ENCODE measurements at regions of chr19 and their contacts with region 1.

Region 1: DNA sequence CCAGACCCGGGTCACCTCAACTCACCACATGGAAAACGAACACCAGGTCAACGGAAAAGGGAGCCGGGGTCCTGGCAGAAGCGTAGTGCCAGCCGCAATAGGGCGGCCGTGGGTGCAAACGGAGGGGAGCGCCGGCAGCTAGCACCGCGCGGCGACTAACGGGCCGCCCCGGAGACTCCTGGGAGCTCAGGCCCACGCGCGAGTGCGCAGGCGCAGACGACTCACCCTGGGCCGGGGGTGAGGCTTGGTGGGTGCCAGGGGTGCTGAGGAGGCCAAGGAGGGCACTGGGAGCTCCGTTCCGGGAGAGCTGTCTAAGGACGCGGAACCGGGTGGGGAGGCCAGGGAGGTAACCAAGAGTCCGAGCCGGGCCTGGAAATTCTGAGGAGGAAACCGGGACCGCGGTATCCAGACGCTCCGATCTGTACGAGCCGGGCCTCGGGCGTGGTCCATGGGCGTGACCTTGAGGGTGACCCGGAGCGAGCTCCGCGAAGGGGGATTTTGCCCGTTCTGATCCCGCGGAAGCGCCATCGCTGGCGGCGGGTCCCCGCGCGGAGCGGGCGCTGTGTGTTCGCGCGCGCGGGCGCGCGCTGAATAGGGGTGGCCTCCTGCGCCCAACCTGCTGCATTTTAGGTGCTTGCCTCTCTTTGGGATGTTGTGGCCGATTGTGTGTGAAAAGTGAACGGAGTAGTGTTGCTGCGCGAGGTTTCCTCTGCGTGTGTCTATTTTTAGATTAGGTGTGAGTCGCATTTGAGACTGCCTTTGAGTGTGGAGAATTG is at the start of gene ZNF382:
- DNase-seq: peak; percentile 75 to 92
- ATAC-seq: peak; percentile 51 to 81 (median 62)
- H3K4me3 ChIP-seq: peak within 1 kb of the TSS; percentile 78
- H3K4me3 Mint-ChIP-seq: peak within 1 kb of the TSS; percentile 81
- H3K27ac ChIP-seq: peak within 1 kb of the TSS; percentile 90
- H3K27ac Mint-ChIP-seq: peak within 1 kb of the TSS; percentile 80 to 89
- H3K4me1 ChIP-seq: peaks cover 20% of the 10 kb centered on the region
- H3K4me1 Mint-ChIP-seq: peaks cover 20 to 28% of the 10 kb centered on the region in 2 donors
- H3K27me3 ChIP-seq: no peaks in the 10 kb centered on the region
- H3K27me3 Mint-ChIP-seq: no peaks in the 10 kb centered on the region
- CTCF ChIP-seq: no peak
- total RNA-seq, gene ZNF382: 3.2 to 8.1 (median 4.2) TPM

Region 2: DNA sequence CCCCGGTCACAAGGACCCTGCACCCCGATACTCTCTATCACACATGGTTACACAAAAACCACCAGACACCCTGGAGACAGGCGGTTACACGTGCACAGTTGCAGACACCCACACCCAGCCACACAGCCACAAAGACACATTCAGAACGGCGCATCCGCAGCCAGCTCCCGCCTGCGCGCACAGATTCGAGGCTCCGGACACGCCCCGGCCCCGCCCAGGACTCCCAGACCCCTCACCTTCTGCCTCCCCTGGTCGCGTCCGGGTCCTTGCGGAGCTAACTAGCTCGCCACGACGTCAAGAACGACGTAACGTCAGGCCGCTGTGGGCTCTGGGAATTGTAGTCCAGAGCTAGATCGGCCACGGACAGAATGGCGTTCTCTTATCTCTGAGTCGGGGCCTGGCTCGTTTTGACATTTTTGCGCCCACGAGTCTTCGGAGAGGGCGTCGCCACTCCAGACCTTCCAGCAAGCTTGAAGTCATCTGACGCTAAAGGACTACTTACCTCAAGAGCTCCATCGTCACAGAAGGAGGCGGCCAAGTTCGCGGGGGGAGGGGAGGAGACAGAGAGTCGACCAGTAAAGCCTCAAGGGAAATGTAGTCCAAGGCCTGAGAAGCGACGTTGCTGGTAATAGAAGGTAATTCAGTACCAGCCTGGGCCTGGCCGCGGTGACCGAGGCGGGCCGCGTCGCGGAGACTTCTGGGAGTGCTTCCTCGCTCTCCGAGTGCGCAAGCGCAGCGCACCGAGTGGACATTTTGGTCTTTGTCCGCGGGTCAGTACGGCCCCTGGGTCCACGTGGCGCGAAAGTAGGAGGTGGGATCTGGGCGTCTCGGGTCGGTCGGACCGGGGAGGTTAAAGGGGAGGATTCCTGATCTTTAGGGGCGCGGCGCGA is 390.7 kb before region 1 on chr19 and contains the starts of genes ZNF146 and ZNF565:
- intact Hi-C with region 1: loop called (anchors 2 kb)
- DNase-seq: peak; percentile 90 to 97
- ATAC-seq: peak; percentile 81 to 95 (median 86)
- H3K4me3 ChIP-seq: peak within 1 kb of the TSS; percentile 92
- H3K4me3 Mint-ChIP-seq: no peak within 1 kb of the TSS
- H3K27ac ChIP-seq: peak within 1 kb of the TSS; percentile 91
- H3K27ac Mint-ChIP-seq: no peak within 1 kb of the TSS
- H3K4me1 ChIP-seq: peaks cover 18% of the 10 kb centered on the region
- H3K4me1 Mint-ChIP-seq: peaks cover 12 to 14% of the 10 kb centered on the region in 2 donors
- H3K27me3 ChIP-seq: no peaks in the 10 kb centered on the region
- H3K27me3 Mint-ChIP-seq: no peaks in the 10 kb centered on the region
- CTCF ChIP-seq: no peak
- total RNA-seq, gene ZNF146: 20.3 to 37.3 (median 21.5) TPM
- total RNA-seq, gene ZNF565: 7.7 to 19.1 (median 10.5) TPM

Region 3: DNA sequence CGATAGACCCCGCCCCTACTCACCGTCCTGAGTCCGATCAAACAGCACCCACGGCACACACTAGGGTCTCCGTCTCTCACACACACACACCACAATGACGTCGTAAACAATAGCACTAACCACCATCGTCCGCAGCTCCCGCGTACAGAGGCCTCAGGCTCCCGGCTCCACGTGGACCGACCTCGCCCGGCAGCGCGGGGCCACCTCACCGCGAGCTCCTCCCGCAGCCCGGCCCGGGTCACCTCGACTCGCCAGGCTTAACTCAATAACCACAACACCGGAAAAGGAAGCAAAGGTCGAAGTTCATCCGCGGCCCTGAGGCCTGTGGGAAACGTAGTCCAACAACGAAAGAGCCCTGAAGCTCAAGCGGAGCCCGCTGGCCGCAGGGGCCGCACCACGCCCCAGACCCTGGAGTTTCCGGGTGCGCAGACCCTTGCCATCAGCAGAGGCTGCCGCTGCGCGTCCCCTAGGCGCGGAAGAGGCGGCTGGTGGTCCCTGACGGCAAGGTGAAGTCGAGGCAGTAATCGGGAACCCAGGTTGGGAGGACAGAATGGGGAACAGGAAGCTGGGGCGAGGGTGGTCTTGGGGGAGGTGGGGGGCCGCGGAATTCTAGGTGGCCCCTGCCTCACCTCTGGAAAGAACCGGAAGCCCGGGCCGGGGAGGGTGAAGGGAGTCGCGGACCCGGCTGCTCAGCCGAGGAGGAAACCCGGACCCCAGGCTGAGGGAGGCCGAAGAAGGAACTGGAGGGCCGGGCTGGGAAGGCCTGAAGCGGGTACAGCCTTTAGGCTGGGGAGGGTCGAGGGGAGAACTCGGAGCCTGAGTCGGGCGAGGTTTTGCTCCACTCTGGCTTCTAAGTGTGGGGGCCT is 32.0 kb before region 1 on chr19 and contains the start of gene ZNF529:
- intact Hi-C with region 1: loop called (anchors 1 kb)
- DNase-seq: peak; percentile 88 to 95
- ATAC-seq: peak; percentile 90 to 97 (median 90)
- H3K4me3 ChIP-seq: peak within 1 kb of the TSS; percentile 83
- H3K4me3 Mint-ChIP-seq: peak within 1 kb of the TSS; percentile 89
- H3K27ac ChIP-seq: peak within 1 kb of the TSS; percentile 86
- H3K27ac Mint-ChIP-seq: peak within 1 kb of the TSS; percentile 91 to 100
- H3K4me1 ChIP-seq: peaks cover 17% of the 10 kb centered on the region
- H3K4me1 Mint-ChIP-seq: peaks cover 36% of the 10 kb centered on the region in 2 donors
- H3K27me3 ChIP-seq: no peaks in the 10 kb centered on the region
- H3K27me3 Mint-ChIP-seq: no peaks in the 10 kb centered on the region
- CTCF ChIP-seq: no peak
- total RNA-seq, gene ZNF529: 23.5 to 36.4 (median 29.2) TPM

Region 4: DNA sequence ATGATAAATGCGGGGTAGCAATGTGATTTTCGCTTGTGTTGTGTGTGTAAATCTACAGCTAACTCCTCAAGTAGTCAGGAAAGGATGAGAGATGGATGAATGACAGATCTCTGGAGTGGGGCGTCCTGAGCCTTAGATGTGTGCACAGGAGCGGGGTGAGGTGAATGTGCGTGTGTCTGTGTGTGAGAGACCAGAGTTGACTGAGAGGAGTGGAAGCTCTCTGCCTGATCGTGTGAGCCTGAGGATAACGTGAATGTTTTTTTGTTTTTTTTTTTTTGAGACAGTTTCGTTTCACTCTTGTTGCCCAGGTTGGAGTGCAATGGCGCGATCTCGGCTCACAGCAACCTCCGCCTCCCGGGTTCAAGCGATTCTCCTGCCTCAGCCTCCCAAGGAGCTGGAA is 60.5 kb after region 1 on chr19:
- intact Hi-C with region 1: loop called (anchors 2 kb)
- DNase-seq: peak in 1 of 2 donors; percentile 10
- ATAC-seq: no peak
- H3K4me3 ChIP-seq: peak overlapping the region; percentile 80
- H3K4me3 Mint-ChIP-seq: peak overlapping the region; percentile 100
- H3K27ac ChIP-seq: no peak overlapping the region
- H3K27ac Mint-ChIP-seq: peak overlapping the region; percentile 98
- H3K4me1 ChIP-seq: peaks cover 20% of the 10 kb centered on the region
- H3K4me1 Mint-ChIP-seq: peaks cover 34 to 40% of the 10 kb centered on the region in 2 donors
- H3K27me3 ChIP-seq: no peaks in the 10 kb centered on the region
- H3K27me3 Mint-ChIP-seq: no peaks in the 10 kb centered on the region
- CTCF ChIP-seq: no peak

Region 5: GRCh38 chr19:36687214-36688056 is 82.1 kb after region 1 on chr19 and contains the start of gene ZNF567:
- intact Hi-C with region 1: loop called (anchors 5 kb)
- DNase-seq: peak; percentile 92 to 98
- ATAC-seq: peak; percentile 91 to 96 (median 95)
- H3K4me3 ChIP-seq: peak within 1 kb of the TSS; percentile 90
- H3K4me3 Mint-ChIP-seq: peak within 1 kb of the TSS; percentile 98
- H3K27ac ChIP-seq: peak within 1 kb of the TSS; percentile 80
- H3K27ac Mint-ChIP-seq: peak within 1 kb of the TSS; percentile 93 to 99
- H3K4me1 ChIP-seq: peaks cover 18% of the 10 kb centered on the region
- H3K4me1 Mint-ChIP-seq: peaks cover 28 to 39% of the 10 kb centered on the region in 2 donors
- H3K27me3 ChIP-seq: no peaks in the 10 kb centered on the region
- H3K27me3 Mint-ChIP-seq: no peaks in the 10 kb centered on the region
- CTCF ChIP-seq: no peak
- total RNA-seq, gene ZNF567: 5.6 to 11.8 (median 10.5) TPM

Measured in natural killer cell (primary cell).